Activated CD4-positive, alpha-beta memory T cell treated with anti-CD3 and anti-CD28 coated beads for 36 hours (primary cell): ENCODE measurements at regions of chr5 and their contacts with region 1.

Region 1: GRCh38 chr5:1883120-1883924 is 597 bp upstream of the IRX4 start:
- DNase-seq: no peak
- H3K4me3 Mint-ChIP-seq: no peak overlapping the region
- H3K27ac Mint-ChIP-seq: no peak overlapping the region
- H3K4me1 Mint-ChIP-seq: peaks cover 9% of the 10 kb centered on the region
- H3K27me3 Mint-ChIP-seq: peaks cover 44% of the 10 kb centered on the region

Region 2: DNA sequence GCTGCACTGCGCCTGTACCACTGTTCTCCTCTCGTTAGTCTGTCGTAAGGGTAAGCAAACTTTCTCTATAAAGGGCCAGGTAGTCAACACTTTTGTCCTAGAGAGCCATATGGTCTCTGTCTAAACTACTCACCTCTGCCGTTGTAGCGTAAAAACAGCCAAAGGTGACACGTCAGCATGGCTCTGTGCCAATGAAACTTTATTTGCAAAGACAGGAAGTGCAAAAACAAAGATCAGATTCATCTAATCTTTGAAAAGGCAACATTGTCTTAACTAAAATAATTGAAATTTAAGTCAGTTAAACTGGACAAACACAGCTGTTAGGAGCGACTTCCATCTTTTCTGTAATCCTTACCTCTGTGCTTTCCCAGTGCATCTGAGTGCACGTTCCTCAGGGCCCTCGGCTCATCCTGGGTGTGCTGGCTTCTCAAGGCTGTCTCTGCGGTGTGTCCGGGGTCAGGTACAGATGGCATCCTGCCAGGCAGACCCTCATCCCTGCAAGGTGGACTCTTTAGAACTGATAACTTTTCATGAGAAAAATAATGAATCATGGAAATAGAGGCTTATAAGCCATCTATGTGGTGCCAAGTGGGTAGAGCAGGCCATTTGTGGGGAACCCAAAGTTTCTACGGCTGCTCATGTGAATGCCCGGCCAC is 34.6 kb after region 1 on chr5:
- CTCF ChIA-PET with region 1: no interaction called
- POLR2A ChIA-PET with region 1: no interaction called
- intact Hi-C with region 1: no loop called
- DNase-seq: no peak
- H3K4me3 Mint-ChIP-seq: no peak overlapping the region
- H3K27ac Mint-ChIP-seq: no peak overlapping the region
- H3K4me1 Mint-ChIP-seq: no peaks in the 10 kb centered on the region
- H3K27me3 Mint-ChIP-seq: peaks cover 6% of the 10 kb centered on the region

Region 3: GRCh38 chr5:2751592-2752021 is 868.3 kb after region 1 on chr5 and contains the start of gene IRX2:
- CTCF ChIA-PET with region 1: no interaction called
- POLR2A ChIA-PET with region 1: no interaction called
- intact Hi-C with region 1: loop called (anchors 5 kb)
- DNase-seq: no peak
- H3K4me3 Mint-ChIP-seq: no peak within 1 kb of the TSS
- H3K27ac Mint-ChIP-seq: no peak within 1 kb of the TSS
- H3K4me1 Mint-ChIP-seq: peaks cover 11% of the 10 kb centered on the region
- H3K27me3 Mint-ChIP-seq: peaks cover 54% of the 10 kb centered on the region
- total RNA-seq, gene IRX2: not detected

Region 4: GRCh38 chr5:3595006-3595961 is 1712.0 kb after region 1 on chr5 and contains the start of gene IRX1:
- CTCF ChIA-PET with region 1: no interaction called
- POLR2A ChIA-PET with region 1: no interaction called
- intact Hi-C with region 1: loop called (anchors 10 kb)
- DNase-seq: no peak
- H3K4me3 Mint-ChIP-seq: no peak within 1 kb of the TSS
- H3K27ac Mint-ChIP-seq: no peak within 1 kb of the TSS
- H3K4me1 Mint-ChIP-seq: peaks cover 5% of the 10 kb centered on the region
- H3K27me3 Mint-ChIP-seq: peaks cover 56% of the 10 kb centered on the region
- total RNA-seq, gene IRX1: not detected